ENCODE measurements at regions of chr2 and their contacts with region 1.

Region 1: GRCh38 chr2:64750817-64751285 is 97.1 kb upstream of the SERTAD2 start:
- DNase-seq: peak; percentile 99
- H3K4me3 Mint-ChIP-seq: peak overlapping the region; percentile 87
- H3K27ac Mint-ChIP-seq: no peak overlapping the region
- H3K4me1 Mint-ChIP-seq: peaks cover 21% of the 10 kb centered on the region
- H3K27me3 Mint-ChIP-seq: no peaks in the 10 kb centered on the region
- CTCF ChIP-seq: no peak

Region 2: DNA sequence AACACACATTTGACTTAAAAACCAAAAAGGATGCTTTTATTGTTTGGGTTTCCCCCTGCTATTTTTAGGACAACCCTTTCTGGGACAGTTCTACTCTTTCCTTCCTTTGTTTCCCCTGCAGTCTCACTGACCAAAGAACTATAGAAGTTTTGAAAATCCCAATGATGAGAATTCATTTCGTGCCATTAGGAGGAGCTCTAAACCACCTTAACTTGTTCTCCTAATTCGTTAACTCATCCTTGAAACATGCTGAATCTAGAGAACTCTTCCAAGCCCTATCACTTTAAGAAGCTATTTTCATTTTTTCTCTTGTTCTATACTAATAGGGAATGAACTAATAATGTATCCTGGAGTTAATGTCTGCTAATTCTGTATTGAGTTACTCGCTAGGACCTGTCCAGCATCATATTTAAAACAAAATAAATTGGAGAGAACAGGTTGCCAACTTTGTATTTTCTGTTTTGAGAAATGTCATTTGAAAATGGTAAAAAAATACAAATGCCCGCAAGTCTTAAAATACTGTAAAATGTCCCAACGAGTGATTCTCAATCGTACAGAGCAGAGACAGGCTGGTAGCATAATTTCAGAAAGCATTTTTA is 163.9 kb before region 1 on chr2:
- CTCF ChIA-PET with region 1: interaction called, 3 read pairs
- POLR2A ChIA-PET with region 1: interaction called, 3 read pairs
- intact Hi-C with region 1: loop called (anchors 2 kb)
- DNase-seq: peak; percentile 59
- H3K4me3 Mint-ChIP-seq: no peak overlapping the region
- H3K27ac Mint-ChIP-seq: peak overlapping the region; percentile 57
- H3K4me1 Mint-ChIP-seq: no peaks in the 10 kb centered on the region
- H3K27me3 Mint-ChIP-seq: no peaks in the 10 kb centered on the region
- CTCF ChIP-seq: peak; percentile 67

Region 3: GRCh38 chr2:64653349-64654062 is 97.3 kb before region 1 on chr2 and contains the start of gene SERTAD2:
- CTCF ChIA-PET with region 1: interaction called, 45 read pairs
- POLR2A ChIA-PET with region 1: interaction called, 724 read pairs
- intact Hi-C with region 1: loop called (anchors 1 kb)
- DNase-seq: peak; percentile 86
- H3K4me3 Mint-ChIP-seq: peak within 1 kb of the TSS; percentile 77
- H3K27ac Mint-ChIP-seq: peak within 1 kb of the TSS; percentile 89
- H3K4me1 Mint-ChIP-seq: peaks cover 22% of the 10 kb centered on the region
- H3K27me3 Mint-ChIP-seq: no peaks in the 10 kb centered on the region
- CTCF ChIP-seq: no peak
- total RNA-seq, gene SERTAD2: 15.0 and 21.6 TPM in 2 replicates

Region 4: DNA sequence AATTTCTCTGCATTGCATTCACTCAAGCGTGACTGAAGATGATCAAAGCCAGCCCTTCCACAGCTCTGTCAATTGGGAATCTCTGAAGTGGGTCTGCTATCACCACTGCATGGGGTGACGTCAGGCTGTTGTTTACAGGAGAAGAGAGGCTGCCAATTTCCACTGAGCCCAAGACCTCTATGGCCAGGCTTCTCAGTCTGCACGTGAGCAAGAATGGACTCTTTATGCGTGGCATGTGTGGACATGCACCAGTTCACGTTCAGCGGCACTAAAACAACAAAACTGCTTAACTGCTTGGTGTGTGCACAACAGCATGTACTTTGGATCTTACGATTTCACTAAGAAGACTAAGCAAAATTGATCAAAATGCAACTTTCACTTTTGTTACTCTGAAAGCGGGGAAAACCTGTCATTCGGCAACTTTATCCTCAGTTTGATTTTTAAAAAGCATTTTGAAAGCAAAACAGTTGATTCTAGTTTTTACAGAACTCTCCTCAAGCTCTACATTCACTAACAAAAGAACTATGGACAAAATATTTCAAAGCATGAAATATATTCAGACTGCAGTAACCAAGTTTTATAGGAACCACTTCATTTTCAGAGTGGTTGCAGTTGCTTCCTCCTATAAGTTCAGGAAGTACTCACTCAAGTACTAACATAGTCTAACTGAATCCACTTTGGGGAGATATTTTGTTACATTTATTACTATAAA is 20.1 kb before region 1 on chr2:
- CTCF ChIA-PET with region 1: no interaction called
- POLR2A ChIA-PET with region 1: interaction called, 77 read pairs
- intact Hi-C with region 1: no loop called
- DNase-seq: peak; percentile 81
- H3K4me3 Mint-ChIP-seq: peak overlapping the region; percentile 63
- H3K27ac Mint-ChIP-seq: peak overlapping the region; percentile 91
- H3K4me1 Mint-ChIP-seq: peaks cover 24% of the 10 kb centered on the region
- H3K27me3 Mint-ChIP-seq: no peaks in the 10 kb centered on the region
- CTCF ChIP-seq: no peak

Region 5: DNA sequence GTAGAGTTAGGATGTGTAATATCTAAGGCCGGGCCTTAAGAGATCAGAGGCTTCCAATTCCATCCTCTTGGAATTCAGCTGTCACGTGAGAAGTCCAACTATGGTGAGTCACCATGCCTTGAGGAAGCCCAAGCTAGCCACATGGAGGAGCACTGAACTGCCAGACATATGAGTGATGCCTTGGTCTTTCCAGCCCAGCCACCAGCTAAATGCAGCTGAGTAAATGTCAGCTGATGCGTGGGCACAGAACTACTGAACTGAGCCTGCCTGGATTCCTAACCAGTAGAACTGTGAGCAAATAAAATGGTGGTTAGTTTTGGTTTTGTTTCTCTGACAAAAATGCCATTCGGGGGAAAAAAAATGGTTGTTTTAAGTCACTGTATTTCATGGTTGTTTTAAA is 56.6 kb after region 1 on chr2:
- CTCF ChIA-PET with region 1: no interaction called
- POLR2A ChIA-PET with region 1: interaction called, 8 read pairs
- intact Hi-C with region 1: loop called (anchors 2 kb)
- DNase-seq: peak; percentile 97
- H3K4me3 Mint-ChIP-seq: peak overlapping the region; percentile 34
- H3K27ac Mint-ChIP-seq: peak overlapping the region; percentile 71
- H3K4me1 Mint-ChIP-seq: peaks cover 17% of the 10 kb centered on the region
- H3K27me3 Mint-ChIP-seq: no peaks in the 10 kb centered on the region
- CTCF ChIP-seq: no peak

Region 6: DNA sequence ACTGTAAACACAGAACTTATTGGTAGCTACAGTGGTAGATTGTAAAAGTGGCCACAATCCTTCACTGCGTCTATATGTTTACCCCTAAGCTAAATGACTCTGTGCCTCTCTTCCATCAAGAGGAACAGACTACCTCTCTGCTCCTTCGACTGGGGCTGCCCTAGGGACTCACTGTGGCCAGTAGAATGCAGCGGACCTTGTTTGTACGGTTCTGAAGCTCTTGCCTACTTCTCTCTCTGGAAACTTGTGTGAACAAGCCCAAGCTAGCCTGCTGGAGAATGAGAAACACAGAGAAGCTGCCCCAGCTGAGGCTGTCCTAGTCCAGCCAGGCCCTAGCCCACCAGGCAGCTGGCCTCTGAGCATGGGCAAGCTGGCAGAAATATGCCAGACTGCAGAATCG is 97.5 kb after region 1 on chr2:
- CTCF ChIA-PET with region 1: no interaction called
- POLR2A ChIA-PET with region 1: interaction called, 15 read pairs
- intact Hi-C with region 1: no loop called
- DNase-seq: no peak
- H3K4me3 Mint-ChIP-seq: no peak overlapping the region
- H3K27ac Mint-ChIP-seq: peak overlapping the region; percentile 35
- H3K4me1 Mint-ChIP-seq: peaks cover 20% of the 10 kb centered on the region
- H3K27me3 Mint-ChIP-seq: no peaks in the 10 kb centered on the region
- CTCF ChIP-seq: no peak

Region 7: GRCh38 chr2:65416945-65417344 is 666.1 kb after region 1 on chr2:
- CTCF ChIA-PET with region 1: no interaction called
- POLR2A ChIA-PET with region 1: no interaction called
- intact Hi-C with region 1: no loop called
- DNase-seq: no peak
- H3K4me3 Mint-ChIP-seq: no peak overlapping the region
- H3K27ac Mint-ChIP-seq: peak overlapping the region; percentile 49
- H3K4me1 Mint-ChIP-seq: peaks cover 34% of the 10 kb centered on the region
- H3K27me3 Mint-ChIP-seq: no peaks in the 10 kb centered on the region
- CTCF ChIP-seq: no peak

Measured in MCF 10A (cell line).